Posterior vena cava (tissue), 2 donors: ENCODE measurements at regions of chr18 and their contacts with region 1.

Region 1: GRCh38 chr18:3162181-3162580 is 57.6 kb downstream of the MYOM1 start:
- DNase-seq: no peak

Region 2: DNA sequence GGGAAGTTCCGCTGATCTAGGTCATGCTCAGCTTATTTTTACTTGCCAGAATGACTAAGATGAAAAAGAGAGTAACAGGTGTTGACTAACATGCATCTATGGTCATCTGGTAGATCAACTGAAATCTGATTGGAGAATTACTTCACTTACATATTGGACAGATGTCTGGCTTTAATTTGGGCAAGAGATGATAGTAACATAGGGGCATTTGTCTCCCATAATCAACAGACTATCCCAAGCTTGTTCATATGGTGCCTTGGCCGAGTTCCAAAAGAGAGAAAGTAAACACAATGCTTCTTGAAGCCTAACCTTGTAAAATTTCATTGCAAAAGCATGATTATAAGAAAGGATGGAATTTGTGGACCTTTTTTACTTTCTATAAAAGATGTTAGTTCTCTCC is 1753.8 kb before region 1 on chr18:
- intact Hi-C with region 1: no loop called
- DNase-seq: no peak

Region 3: GRCh38 chr18:1784113-1784512 is 1378.1 kb before region 1 on chr18:
- intact Hi-C with region 1: no loop called
- DNase-seq: peak; percentile 52

Region 4: GRCh38 chr18:2002151-2002550 is 1160.0 kb before region 1 on chr18:
- intact Hi-C with region 1: no loop called
- DNase-seq: no peak

Region 5: GRCh38 chr18:3230401-3231334 is 68.5 kb after region 1 on chr18:
- intact Hi-C with region 1: loop called in 1 of 2 experiments (anchors 10 kb)
- DNase-seq: no peak